ENCODE measurements at regions of chr17 and their contacts with region 1.

Region 1: DNA sequence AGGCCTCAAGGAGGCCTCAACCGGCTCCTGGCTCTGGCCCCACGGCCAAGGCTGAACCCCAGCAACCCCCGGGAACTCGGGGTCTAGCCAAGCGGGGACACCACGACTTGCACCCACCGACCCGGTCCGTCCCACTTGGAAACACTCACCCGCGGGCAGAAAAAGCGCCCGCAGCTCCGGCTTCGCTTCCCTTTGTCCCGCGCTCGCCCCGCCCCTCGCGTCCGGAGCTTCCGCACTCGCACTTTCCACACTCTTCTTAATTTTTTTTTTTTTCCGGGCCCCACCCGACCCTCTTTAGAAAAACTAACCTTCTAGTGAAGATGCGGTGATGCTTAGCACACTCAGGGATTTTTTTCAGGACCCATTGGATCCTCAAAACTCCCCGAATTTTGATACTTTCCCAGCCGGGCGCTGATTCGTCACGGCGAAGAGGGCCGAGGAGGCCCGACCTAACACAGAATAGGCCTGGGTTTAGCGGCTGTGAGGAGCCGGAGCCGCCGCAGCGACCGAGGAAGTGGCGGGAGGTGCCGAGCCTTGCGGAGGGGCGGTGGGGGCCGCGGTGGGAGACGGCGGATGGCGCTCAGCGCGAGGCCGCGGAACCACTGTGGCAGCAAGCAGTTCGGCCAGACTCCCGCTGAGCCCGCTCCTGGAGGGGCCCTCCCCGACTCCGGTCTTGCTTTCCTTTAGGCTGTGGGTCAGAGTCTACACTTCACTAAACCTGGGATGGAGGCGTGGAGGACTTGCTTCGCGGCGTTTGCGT is at the start of gene SMARCE1:
- DNase-seq: peak; percentile 73
- H3K4me3 Mint-ChIP-seq: peak within 1 kb of the TSS; percentile 95
- H3K27ac Mint-ChIP-seq: peak within 1 kb of the TSS; percentile 94
- H3K4me1 Mint-ChIP-seq: peaks cover 52% of the 10 kb centered on the region
- H3K27me3 Mint-ChIP-seq: no peaks in the 10 kb centered on the region
- total RNA-seq, gene SMARCE1: 96.7 to 102 TPM

Region 2: GRCh38 chr17:40632216-40632615 is 15.6 kb before region 1 on chr17:
- CTCF ChIA-PET with region 1: interaction called, 3 read pairs
- POLR2A ChIA-PET with region 1: interaction called, 55 read pairs
- DNase-seq: no peak
- H3K4me3 Mint-ChIP-seq: no peak overlapping the region
- H3K27ac Mint-ChIP-seq: no peak overlapping the region
- H3K4me1 Mint-ChIP-seq: peaks cover 12% of the 10 kb centered on the region
- H3K27me3 Mint-ChIP-seq: no peaks in the 10 kb centered on the region

Region 3: GRCh38 chr17:40818733-40819527 is 171.1 kb after region 1 on chr17:
- CTCF ChIA-PET with region 1: no interaction called
- POLR2A ChIA-PET with region 1: interaction called, 19 read pairs
- DNase-seq: peak; percentile 87
- H3K4me3 Mint-ChIP-seq: peak overlapping the region; percentile 85
- H3K27ac Mint-ChIP-seq: peak overlapping the region; percentile 81
- H3K4me1 Mint-ChIP-seq: peaks cover 38% of the 10 kb centered on the region
- H3K27me3 Mint-ChIP-seq: peaks cover 8% of the 10 kb centered on the region

Measured in activated CD4-positive, alpha-beta memory T cell treated with anti-CD3 and anti-CD28 coated beads, Interleukin-2, amount 10 ng/mL, durations not matched to agents 7 days and 5 days (primary cell).